Activated CD4-positive, alpha-beta T cell treated with anti-CD3 and anti-CD28 coated beads, Interleukin-2, amount 10 ng/mL, durations not matched to agents 7 days and 5 days (primary cell): ENCODE measurements at regions of chr13 and their contacts with region 1.

Region 1: DNA sequence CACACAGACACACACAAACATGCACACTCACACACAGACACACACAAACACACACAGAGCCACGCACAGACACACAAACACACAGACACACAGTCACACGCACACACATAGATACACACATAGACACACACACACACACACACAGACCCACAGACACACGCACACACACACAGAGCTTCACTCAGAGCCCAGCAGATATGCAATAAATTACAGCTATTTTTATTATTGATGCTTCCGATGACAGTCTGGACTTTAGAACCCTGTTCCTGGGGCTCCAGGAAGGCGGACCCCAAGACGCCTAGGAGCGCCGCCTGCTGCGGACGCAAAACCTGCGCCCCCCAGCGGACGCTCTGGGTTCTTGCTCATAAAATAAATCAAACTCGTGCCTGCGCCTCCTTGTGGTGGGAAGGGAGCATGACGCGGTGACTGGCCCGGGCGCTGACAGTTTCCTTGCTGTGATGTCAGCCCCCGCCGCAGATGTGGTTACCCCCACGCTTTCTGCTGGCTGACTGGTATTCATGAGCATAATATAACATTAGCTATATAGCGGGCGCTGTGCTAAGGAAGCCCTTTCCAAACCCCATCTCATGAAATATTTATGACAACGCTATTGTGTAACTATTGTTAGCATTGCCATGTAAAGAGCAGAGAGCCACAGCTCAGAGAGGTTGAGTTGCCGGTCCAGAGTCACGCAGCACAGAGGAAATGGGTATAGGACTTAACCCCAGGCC is 64.4 kb upstream of the TM9SF2 start:
- DNase-seq: peak; percentile 95
- H3K4me3 Mint-ChIP-seq: peak overlapping the region; percentile 9
- H3K27ac Mint-ChIP-seq: peak overlapping the region; percentile 47
- H3K4me1 Mint-ChIP-seq: peaks cover 72% of the 10 kb centered on the region
- H3K27me3 Mint-ChIP-seq: peaks cover 18% of the 10 kb centered on the region

Region 2: DNA sequence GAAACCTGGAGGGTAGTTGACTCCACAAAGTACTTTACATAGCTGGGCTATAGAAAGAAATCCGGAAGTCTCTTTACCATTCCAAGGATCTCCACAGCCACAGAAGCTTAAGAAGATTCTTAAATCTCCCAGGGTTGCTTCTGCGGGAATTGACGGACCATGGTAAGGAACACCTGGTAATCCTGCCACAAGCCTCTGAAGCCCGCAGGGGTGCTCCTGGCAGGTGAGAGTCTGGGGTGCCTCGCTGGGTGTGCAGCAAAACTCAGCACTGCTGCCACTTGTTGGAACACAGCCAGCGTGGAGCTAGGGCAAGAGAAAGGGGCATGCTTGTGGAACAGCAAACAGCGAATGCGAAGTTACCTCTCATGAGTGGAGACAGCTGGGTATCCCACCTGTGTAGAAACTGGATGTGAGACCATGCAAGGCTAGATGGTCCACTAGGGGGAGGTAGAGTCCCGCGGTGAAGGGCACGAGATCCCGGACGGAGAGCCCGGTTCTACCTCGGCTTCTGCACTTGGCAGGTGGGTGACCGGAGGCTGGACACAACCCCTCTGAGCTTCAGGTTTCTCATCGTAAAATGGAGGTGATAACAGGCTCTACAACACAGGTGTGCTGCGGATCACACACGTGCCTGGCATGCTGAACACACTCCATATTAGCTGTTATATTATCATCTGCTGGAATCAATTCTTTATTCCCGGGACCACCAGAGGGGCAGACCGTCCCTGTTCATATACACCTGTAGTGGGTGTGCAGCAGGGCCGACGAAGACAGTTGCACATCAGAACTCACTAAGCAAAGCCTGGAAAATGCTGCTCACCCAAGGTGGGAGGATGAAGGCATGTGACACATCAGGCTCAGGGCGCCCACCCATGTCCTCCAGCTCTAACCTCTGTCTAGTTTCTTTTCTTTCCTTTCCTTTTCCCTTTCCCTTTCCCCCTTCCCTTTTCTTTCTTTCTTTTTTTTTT is 260.3 kb before region 1 on chr13:
- CTCF ChIA-PET with region 1: interaction called, 12 read pairs
- POLR2A ChIA-PET with region 1: no interaction called
- DNase-seq: peak; percentile 82
- H3K4me3 Mint-ChIP-seq: no peak overlapping the region
- H3K27ac Mint-ChIP-seq: no peak overlapping the region
- H3K4me1 Mint-ChIP-seq: peaks cover 40% of the 10 kb centered on the region
- H3K27me3 Mint-ChIP-seq: peaks cover 2% of the 10 kb centered on the region

Region 3: GRCh38 chr13:99275093-99275469 is 161.8 kb before region 1 on chr13:
- CTCF ChIA-PET with region 1: interaction called, 109 read pairs
- POLR2A ChIA-PET with region 1: no interaction called
- DNase-seq: peak; percentile 55
- H3K4me3 Mint-ChIP-seq: no peak overlapping the region
- H3K27ac Mint-ChIP-seq: peak overlapping the region; percentile 36
- H3K4me1 Mint-ChIP-seq: peaks cover 87% of the 10 kb centered on the region
- H3K27me3 Mint-ChIP-seq: no peaks in the 10 kb centered on the region

Region 4: DNA sequence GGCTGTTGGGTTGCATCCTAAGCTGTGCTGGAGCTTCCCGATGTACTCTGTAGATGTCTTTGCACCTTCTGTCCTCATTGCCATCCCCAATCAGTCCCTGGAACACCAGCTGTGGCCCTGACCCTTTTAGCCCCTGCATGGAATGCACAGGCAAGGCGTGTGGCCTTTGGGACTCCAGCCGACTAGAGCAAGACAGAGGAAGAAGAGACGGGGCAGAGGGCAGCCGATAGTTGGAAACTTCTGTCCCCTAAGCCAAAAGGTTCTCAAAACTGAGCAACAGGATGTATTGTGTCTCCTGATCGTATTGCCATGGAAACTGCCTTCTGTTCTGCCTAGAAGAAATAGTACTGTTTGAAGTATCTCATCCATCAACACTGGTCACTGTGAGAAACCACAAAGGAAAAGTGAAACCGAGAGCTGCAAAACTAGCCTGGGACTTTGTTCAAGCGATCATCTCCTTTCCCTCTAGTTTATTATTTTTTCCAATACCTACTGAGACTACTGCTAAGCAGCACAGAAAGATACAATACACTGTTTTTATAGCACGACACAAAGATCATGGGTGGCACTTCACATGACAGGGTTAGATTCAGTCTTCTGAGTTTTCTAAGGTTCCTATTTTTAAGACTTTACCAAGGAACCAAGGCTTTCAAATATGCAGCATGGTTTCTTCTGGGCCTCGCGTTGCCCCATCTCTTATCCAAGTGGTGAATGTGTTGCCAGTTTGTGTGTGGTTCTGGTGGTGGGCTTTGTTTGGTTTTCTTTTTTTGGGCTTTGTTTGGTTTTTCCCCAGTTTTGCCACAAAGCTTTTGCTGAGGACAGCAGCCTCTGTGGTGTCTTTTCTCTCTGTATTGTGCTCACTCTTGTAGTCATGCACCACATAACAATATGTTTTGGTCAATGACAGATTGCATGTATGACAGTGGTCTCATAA is 80.4 kb before region 1 on chr13:
- CTCF ChIA-PET with region 1: interaction called, 13 read pairs
- POLR2A ChIA-PET with region 1: no interaction called
- DNase-seq: peak; percentile 90
- H3K4me3 Mint-ChIP-seq: peak overlapping the region; percentile 63
- H3K27ac Mint-ChIP-seq: peak overlapping the region; percentile 98
- H3K4me1 Mint-ChIP-seq: peaks cover 98% of the 10 kb centered on the region
- H3K27me3 Mint-ChIP-seq: no peaks in the 10 kb centered on the region

Region 5: DNA sequence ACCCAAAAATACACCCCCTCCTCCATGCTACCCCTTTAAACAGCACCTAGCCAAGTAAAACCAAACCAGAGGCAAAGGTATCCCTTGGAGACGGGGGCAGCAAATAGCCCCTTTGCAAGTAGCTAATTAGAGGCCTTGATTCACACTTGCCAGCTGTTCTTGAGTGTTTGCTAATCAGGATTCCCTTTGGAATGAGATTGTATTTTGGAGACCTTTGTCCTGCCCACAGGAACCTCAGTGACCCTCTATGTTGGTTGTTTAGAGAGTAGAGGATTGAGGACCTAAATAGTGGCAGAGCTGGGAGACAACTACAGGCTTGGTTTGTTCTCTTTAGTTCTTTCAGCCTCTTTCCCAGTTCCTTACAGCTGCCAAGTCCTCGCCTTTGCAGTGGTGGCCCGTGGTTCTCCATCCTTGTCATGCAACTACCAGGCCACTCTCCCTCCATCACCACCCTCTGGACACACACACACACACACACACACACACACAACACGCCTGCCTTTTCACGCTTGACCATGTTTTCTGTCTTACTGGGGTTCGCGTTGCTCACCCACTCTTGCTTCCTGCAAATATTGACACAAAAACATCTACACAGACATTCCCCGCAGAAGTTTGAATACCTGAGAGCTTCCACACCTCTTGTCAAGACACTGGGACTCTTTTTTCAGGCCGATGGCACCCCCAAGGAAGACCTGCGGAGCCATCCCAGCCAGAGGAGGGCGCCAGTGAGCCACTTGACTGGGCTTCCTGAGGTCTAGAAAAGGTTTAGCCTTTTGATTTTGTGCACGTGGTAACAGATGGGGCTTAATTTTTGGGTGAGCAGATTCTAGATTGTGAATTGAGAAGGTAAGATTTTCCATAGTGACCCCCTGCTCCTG is 49.7 kb before region 1 on chr13:
- CTCF ChIA-PET with region 1: interaction called, 93 read pairs
- POLR2A ChIA-PET with region 1: no interaction called
- DNase-seq: peak; percentile 84
- H3K4me3 Mint-ChIP-seq: no peak overlapping the region
- H3K27ac Mint-ChIP-seq: peak overlapping the region; percentile 73
- H3K4me1 Mint-ChIP-seq: peaks cover 64% of the 10 kb centered on the region
- H3K27me3 Mint-ChIP-seq: no peaks in the 10 kb centered on the region

Region 6: GRCh38 chr13:99414048-99414995 is 22.5 kb before region 1 on chr13:
- CTCF ChIA-PET with region 1: interaction called, 87 read pairs
- POLR2A ChIA-PET with region 1: no interaction called
- DNase-seq: no peak
- H3K4me3 Mint-ChIP-seq: no peak overlapping the region
- H3K27ac Mint-ChIP-seq: no peak overlapping the region
- H3K4me1 Mint-ChIP-seq: peaks cover 45% of the 10 kb centered on the region
- H3K27me3 Mint-ChIP-seq: no peaks in the 10 kb centered on the region

Region 7: DNA sequence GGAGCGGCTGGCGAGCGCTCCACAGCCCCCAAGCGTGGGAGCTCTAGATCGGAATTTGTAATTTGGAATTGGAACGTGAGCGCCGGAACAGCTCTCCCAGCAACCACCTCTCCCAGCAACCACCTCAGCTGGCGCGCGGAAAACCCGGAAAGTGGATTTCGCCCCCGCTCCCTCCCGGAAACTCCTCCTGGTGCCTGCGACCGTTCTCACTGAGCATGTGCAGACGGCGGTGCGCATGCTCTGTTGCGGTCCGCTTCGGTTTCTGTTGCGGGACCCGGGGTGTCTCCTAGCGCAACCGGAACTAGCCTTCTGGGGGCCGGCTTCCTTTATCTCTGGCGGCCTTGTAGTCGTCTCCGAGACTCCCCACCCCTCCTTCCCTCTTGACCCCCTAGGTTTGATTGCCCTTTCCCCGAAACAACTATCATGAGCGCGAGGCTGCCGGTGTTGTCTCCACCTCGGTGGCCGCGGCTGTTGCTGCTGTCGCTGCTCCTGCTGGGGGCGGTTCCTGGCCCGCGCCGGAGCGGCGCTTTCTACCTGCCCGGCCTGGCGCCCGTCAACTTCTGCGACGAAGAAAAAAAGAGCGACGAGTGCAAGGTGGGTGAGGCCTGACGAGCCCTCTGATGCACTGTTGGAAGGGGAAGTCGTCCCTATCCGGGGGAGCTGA is 64.5 kb after region 1 on chr13 and contains the start of gene TM9SF2:
- CTCF ChIA-PET with region 1: interaction called, 20 read pairs
- POLR2A ChIA-PET with region 1: no interaction called
- DNase-seq: peak; percentile 97
- H3K4me3 Mint-ChIP-seq: peak within 1 kb of the TSS; percentile 94
- H3K27ac Mint-ChIP-seq: peak within 1 kb of the TSS; percentile 95
- H3K4me1 Mint-ChIP-seq: peaks cover 80% of the 10 kb centered on the region
- H3K27me3 Mint-ChIP-seq: no peaks in the 10 kb centered on the region
- total RNA-seq, gene TM9SF2: 79.2 to 87.9 TPM

Region 8: GRCh38 chr13:99892196-99892613 is 455.4 kb after region 1 on chr13:
- CTCF ChIA-PET with region 1: no interaction called
- POLR2A ChIA-PET with region 1: no interaction called
- DNase-seq: no peak
- H3K4me3 Mint-ChIP-seq: no peak overlapping the region
- H3K27ac Mint-ChIP-seq: no peak overlapping the region
- H3K4me1 Mint-ChIP-seq: peaks cover 8% of the 10 kb centered on the region
- H3K27me3 Mint-ChIP-seq: peaks cover 44% of the 10 kb centered on the region

Region 9: DNA sequence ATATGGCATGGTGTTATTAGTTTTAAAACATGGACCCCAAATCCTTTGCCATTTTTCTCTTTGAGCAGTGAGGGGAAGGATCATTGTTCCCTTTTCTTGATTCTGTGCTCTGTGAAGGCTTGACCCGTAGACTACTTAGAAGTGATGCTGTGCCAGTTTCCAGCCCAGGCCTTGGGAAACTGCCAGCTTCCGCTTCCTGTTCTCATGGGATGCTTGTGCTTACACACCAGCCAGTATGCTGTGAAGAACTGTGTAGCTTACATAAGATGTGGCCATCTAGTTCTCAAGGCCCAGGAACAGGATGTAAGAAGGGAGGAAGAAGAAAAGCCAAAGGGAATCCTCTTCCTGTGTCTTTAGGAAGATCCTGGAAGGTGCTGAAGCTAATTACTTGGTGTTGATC is 833.0 kb after region 1 on chr13:
- CTCF ChIA-PET with region 1: no interaction called
- POLR2A ChIA-PET with region 1: no interaction called
- DNase-seq: no peak
- H3K4me3 Mint-ChIP-seq: no peak overlapping the region
- H3K27ac Mint-ChIP-seq: no peak overlapping the region
- H3K4me1 Mint-ChIP-seq: no peaks in the 10 kb centered on the region
- H3K27me3 Mint-ChIP-seq: no peaks in the 10 kb centered on the region